Right cardiac atrium (tissue), 5 donors: ENCODE measurements at regions of chr5 and their contacts with region 1.

Region 1: GRCh38 chr5:77133061-77133758 is 46.1 kb upstream of the ZBED3 start:
- DNase-seq: peak; percentile 75 to 78 (median 77)
- ATAC-seq: peak; percentile 93 to 96
- H3K4me3 ChIP-seq: no peak overlapping the region
- H3K27ac ChIP-seq: no peak overlapping the region
- H3K4me1 ChIP-seq: peaks cover 3% of the 10 kb centered on the region
- H3K27me3 ChIP-seq: no peaks in the 10 kb centered on the region

Region 2: DNA sequence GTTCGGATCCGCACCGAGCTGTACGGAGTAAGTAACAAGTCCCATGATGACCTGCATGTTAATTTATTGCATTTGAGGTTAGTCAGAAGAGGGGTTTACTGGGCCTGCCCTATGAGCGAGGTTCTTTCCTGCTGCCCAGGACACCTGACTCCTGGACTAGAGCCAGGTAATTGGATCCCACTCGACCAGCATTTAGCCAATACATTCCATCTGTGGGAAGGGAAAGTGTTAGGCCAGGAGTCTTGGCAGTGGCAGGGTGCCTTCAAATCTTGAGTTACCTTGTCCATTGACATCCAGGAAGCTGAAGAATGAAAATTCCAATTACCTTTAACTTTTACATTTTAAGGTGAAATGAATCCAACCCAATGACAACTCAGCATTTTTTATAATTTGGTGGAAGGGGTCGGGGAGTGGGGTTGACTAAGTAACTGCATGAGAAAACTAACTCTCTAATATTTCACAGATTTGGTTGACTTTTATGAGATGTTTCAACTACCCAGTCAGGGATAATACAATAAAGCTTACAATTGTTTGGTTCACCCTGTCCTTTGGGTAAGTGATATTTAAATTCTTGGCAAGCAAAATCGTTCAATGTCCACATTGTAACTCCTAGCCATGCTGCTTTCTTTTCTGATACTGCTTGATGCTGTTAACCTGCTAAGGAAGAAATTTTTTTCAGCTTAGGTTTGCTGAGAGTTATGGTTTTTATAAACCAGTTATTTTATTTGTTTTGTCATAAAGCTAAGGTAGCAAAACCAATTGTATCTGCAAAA is 841.7 kb before region 1 on chr5:
- intact Hi-C with region 1: no loop called
- DNase-seq: no peak
- ATAC-seq: no peak
- H3K4me3 ChIP-seq: no peak overlapping the region
- H3K27ac ChIP-seq: no peak overlapping the region
- H3K4me1 ChIP-seq: no peaks in the 10 kb centered on the region
- H3K27me3 ChIP-seq: no peaks in the 10 kb centered on the region

Region 3: DNA sequence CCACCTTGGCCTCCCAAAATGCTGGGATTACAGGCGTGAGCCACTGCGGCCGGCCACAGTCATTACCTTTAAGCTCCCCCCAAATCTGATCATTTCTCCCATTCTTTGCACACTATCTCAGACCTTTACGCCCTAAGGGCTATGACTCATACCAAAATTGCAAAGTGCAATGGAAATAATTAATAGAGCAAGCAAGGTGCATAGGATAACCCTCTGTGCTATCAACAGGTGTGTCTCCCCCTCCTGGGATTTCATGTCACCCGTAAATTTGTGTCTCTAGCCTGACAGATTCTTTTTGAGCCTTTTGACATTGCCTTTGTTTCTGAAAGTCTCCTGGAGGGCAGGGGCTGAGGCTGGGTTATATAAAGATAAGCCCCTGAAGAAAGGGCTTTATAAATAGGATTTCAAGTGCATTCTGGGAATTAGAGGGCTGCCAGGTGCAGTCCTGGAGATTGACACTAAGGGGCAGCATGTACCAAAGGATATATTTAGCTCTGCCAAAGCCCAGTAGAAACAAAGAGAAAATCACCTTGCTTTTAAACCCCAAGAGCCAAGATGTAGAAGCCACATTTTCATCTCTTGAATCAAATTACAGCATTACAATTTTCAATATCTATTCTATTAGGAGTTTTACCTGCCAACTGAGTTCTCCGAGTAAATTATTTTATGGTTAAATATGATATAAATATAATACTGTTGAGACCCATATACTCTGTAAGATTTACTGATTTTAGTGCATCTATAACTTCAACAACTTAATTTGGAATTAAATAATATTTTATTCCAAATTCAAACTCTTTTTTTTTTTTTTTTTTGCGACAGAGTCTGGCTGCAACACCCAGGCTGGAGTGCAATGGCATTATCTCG is 265.1 kb before region 1 on chr5:
- intact Hi-C with region 1: no loop called
- DNase-seq: peak; percentile 54 to 76 (median 74)
- ATAC-seq: peak; percentile 88 to 90
- H3K4me3 ChIP-seq: no peak overlapping the region
- H3K27ac ChIP-seq: no peak overlapping the region
- H3K4me1 ChIP-seq: no peaks in the 10 kb centered on the region
- H3K27me3 ChIP-seq: no peaks in the 10 kb centered on the region

Region 4: DNA sequence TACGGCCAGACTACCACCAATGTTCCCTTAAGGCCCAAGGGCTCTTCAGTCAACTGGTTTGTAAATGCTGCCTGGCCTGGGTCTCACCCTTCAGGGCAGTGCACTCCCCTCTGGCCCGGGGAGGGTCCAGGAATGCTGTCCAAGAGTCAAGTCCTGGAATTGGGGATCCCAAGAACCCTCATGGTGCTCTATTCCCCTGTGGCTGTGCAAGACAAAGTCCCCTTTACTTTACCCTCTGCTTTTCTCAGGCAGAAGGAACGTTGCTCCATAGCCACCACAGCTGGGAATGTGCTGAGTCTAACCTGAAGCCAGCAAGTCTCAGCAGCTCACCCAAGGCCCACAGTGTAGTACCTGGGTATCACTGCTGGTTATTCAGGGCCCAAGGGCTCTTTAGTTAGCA is 231.7 kb before region 1 on chr5:
- intact Hi-C with region 1: no loop called
- DNase-seq: no peak
- ATAC-seq: no peak
- H3K4me3 ChIP-seq: no peak overlapping the region
- H3K27ac ChIP-seq: no peak overlapping the region
- H3K4me1 ChIP-seq: no peaks in the 10 kb centered on the region
- H3K27me3 ChIP-seq: no peaks in the 10 kb centered on the region

Region 5: DNA sequence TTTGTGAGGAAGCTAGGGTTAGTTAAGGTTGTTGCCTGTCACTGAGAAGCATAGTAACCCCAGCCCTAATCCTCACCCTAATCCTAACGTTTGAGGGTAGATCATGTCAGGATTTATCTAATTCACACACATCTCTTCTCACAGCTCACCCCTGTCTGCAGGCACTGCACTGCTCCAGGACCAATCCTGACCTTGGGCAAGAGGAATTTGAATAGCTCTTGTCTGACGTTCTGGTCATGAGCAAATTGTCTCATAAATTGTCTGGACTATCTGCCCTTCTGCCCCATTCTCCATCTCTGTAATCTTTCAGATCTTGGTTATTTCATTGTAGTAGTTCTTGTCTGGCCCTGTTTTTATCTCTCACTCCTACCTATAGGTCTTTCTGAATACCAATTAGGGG is 161.7 kb before region 1 on chr5:
- intact Hi-C with region 1: no loop called
- DNase-seq: no peak
- ATAC-seq: no peak
- H3K4me3 ChIP-seq: no peak overlapping the region
- H3K27ac ChIP-seq: no peak overlapping the region
- H3K4me1 ChIP-seq: no peaks in the 10 kb centered on the region
- H3K27me3 ChIP-seq: no peaks in the 10 kb centered on the region

Region 6: DNA sequence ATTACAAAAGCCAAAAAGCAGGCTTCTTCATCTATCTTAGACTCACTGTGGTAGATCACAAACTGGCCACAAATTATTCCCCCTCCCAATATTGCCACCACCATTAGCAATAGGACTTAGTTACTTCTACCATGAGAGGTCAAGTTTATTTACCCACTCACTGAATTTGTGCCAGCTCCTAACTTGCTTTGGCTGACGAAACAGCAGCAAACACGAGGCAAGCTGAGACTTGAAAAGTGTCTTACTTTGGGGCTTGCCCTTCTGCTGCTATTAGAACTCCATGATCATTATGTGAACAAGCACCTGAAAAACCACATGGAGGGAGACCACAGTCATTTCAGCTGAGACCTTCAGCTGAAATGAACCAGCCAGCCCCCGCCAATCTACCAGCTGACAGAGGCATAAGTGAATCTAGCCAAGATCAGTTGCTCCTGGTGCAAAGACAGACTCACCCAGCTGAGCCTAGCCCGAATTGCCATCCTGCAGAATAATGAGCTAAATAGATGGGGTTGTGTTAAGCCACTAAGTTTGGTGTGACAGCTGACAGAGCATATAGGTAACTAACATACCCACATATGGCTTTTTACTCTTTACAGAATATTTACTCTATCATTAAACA is 353.2 kb after region 1 on chr5:
- intact Hi-C with region 1: loop called in 1 of 4 experiments (anchors 10 kb)
- DNase-seq: no peak
- ATAC-seq: no peak
- H3K4me3 ChIP-seq: no peak overlapping the region
- H3K27ac ChIP-seq: no peak overlapping the region
- H3K4me1 ChIP-seq: no peaks in the 10 kb centered on the region
- H3K27me3 ChIP-seq: no peaks in the 10 kb centered on the region